Calu3 (cell line): ENCODE measurements at regions of chr1 and their contacts with region 1.

Region 1: GRCh38 chr1:228131766-228132165 is 8.3 kb upstream of the GUK1 start:
- DNase-seq: peak; percentile 52
- H3K4me3 Mint-ChIP-seq: peak overlapping the region; percentile 79
- H3K27ac Mint-ChIP-seq: peak overlapping the region; percentile 80
- H3K4me1 Mint-ChIP-seq: peaks cover 17% of the 10 kb centered on the region
- H3K27me3 Mint-ChIP-seq: no peaks in the 10 kb centered on the region
- CTCF ChIP-seq: no peak

Region 2: GRCh38 chr1:227999056-227999930 is 132.5 kb before region 1 on chr1:
- CTCF ChIA-PET with region 1: interaction called, 12 read pairs
- intact Hi-C with region 1: no loop called
- DNase-seq: peak; percentile 88
- H3K4me3 Mint-ChIP-seq: no peak overlapping the region
- H3K27ac Mint-ChIP-seq: no peak overlapping the region
- H3K4me1 Mint-ChIP-seq: no peaks in the 10 kb centered on the region
- H3K27me3 Mint-ChIP-seq: peaks cover 68% of the 10 kb centered on the region
- CTCF ChIP-seq: peak; percentile 85

Region 3: DNA sequence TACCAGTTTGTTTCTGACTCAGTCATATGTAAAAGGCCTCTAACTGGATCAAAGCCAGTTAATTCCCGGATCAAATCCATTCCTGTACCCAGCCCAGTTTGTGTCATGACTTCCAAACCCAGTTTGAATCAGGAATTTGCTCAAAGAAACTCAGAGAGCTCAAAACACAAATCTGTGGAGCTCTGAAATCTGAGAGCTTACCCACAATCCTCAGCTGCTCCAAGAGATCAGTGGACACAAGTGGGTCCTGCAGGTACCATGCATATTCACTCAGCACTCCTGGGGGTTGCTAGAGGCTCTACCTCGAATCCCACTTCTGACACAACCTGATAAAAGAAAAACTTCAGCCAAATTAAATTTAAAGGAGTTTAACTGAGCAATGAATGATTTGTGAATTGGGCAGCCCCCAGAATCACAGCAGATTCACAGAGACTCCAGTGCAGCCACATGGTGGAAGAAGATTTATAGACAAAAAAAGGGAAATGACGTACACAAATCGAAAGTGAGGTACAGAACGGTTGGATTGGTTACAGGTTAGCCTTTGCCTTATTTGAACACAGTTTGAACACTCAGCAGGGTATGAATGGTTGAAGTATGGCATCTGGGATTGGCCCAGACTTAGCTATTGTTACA is 10.8 kb before region 1 on chr1:
- CTCF ChIA-PET with region 1: no interaction called
- intact Hi-C with region 1: no loop called
- DNase-seq: no peak
- H3K4me3 Mint-ChIP-seq: no peak overlapping the region
- H3K27ac Mint-ChIP-seq: no peak overlapping the region
- H3K4me1 Mint-ChIP-seq: peaks cover 11% of the 10 kb centered on the region
- H3K27me3 Mint-ChIP-seq: no peaks in the 10 kb centered on the region
- CTCF ChIP-seq: no peak

Region 4: DNA sequence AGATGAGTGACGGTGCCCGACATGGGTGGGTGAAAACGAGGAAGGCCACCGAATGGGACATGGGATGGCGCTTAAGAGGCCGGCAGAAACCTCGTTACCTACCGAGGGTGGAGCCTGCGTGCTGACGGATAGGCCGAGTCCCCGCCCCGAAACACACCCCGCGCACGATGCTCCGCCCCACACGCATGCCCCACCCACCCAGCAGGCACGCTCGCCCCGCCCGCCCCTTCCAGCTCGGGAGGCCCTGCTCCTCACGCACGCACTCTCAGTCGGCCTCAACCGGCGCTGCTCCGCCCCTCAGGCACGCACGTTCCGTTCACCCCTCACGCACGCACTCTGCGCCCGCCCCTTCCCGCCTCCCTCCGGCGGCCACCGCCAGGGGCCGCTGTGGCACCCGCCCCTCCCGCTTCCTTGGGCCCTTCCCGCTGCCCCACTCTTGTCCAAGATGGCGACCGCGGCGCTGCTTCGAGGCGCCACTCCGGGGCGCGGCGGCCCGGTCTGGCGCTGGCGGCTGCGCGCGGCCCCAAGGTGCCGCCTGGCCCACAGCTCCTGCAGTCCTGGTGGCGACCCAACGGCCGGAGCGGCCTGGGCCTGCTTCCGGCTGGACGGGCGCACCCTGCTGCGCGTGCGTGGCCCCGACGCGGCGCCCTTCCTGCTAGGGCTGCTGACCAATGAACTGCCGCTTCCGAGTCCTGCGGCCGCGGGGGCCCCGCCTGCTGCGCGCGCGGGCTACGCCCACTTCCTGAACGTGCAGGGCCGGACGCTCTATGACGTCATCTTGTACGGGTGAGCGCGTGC is 33.8 kb after region 1 on chr1 and contains the start of gene IBA57:
- CTCF ChIA-PET with region 1: interaction called, 32 read pairs
- intact Hi-C with region 1: loop called (anchors 1 kb)
- DNase-seq: peak; percentile 100
- H3K4me3 Mint-ChIP-seq: peak within 1 kb of the TSS; percentile 84
- H3K27ac Mint-ChIP-seq: peak within 1 kb of the TSS; percentile 98
- H3K4me1 Mint-ChIP-seq: peaks cover 14% of the 10 kb centered on the region
- H3K27me3 Mint-ChIP-seq: no peaks in the 10 kb centered on the region
- CTCF ChIP-seq: peak; percentile 93
- total RNA-seq, gene IBA57: 9.2 and 9.5 TPM in 2 replicates

Region 5: GRCh38 chr1:228198977-228199590 is 67.3 kb after region 1 on chr1:
- CTCF ChIA-PET with region 1: no interaction called
- intact Hi-C with region 1: no loop called
- DNase-seq: no peak
- H3K4me3 Mint-ChIP-seq: no peak overlapping the region
- H3K27ac Mint-ChIP-seq: no peak overlapping the region
- H3K4me1 Mint-ChIP-seq: no peaks in the 10 kb centered on the region
- H3K27me3 Mint-ChIP-seq: peaks cover 15% of the 10 kb centered on the region
- CTCF ChIP-seq: no peak

Region 6: GRCh38 chr1:228212966-228213844 is 81.4 kb after region 1 on chr1:
- CTCF ChIA-PET with region 1: interaction called, 10 read pairs
- intact Hi-C with region 1: no loop called
- DNase-seq: peak; percentile 90
- H3K4me3 Mint-ChIP-seq: peak overlapping the region; percentile 70
- H3K27ac Mint-ChIP-seq: no peak overlapping the region
- H3K4me1 Mint-ChIP-seq: no peaks in the 10 kb centered on the region
- H3K27me3 Mint-ChIP-seq: no peaks in the 10 kb centered on the region
- CTCF ChIP-seq: peak; percentile 16

Region 7: DNA sequence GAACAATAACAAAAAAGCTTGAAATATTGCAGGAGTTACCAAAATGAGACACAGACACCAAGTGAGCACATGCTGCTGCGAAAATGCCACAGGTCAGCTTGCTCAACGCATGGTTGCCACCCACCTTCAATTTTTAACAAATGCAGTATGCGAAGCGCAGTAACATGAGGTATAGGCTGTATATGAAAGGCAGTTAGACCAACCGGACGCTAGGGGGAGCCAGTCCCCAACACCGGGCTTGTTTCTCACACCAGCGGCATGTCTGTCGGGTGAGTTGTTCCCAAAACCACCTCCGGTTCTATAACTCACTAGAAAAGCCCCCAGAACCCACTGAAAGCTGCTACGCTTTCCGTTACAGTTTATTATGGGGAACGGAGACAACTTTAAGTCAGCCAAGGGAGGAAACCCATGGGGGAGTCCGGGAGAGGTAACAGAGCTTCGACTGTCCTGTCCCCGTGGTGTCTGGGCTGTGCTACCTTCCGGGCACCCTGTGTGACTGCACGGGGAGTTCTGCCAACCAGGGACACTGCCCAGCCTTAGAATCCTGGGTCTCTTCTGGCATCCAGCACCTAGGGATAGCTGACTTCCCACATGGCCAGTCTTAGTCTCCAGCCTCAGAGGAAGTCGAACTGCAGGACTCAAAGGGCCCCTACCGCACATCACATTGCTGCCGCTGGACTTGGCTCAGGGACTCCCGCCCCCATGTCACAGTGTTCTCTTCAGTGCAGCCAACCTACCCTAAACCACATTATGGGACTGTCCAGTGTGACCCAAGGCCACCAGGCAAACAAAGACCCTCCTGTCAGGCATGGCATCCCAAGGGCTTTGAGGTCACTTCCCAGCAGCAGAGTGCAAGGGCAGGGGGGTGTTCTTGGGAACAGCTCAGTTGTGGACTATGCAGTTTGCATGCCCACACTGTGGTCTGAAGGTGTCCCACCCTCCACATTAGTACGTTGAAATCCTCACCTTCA is 369.4 kb after region 1 on chr1:
- CTCF ChIA-PET with region 1: no interaction called
- intact Hi-C with region 1: loop called (anchors 5 kb)
- DNase-seq: peak; percentile 91
- H3K4me3 Mint-ChIP-seq: no peak overlapping the region
- H3K27ac Mint-ChIP-seq: no peak overlapping the region
- H3K4me1 Mint-ChIP-seq: no peaks in the 10 kb centered on the region
- H3K27me3 Mint-ChIP-seq: peaks cover 19% of the 10 kb centered on the region
- CTCF ChIP-seq: peak; percentile 87